Naive thymus-derived CD4-positive, alpha-beta T cell (primary cell): ENCODE measurements at regions of chr17 and their contacts with region 1.

Region 1: GRCh38 chr17:28717578-28718333 is at the start of gene RAB34:
- DNase-seq: peak in 2 of 9 donors; percentile 18 to 21
- ATAC-seq: no peak
- H3K4me3 ChIP-seq: no peak within 1 kb of the TSS
- H3K4me3 Mint-ChIP-seq: peak within 1 kb of the TSS; percentile 58 to 99 (median 76)
- H3K27ac ChIP-seq: peak within 1 kb of the TSS; percentile 52
- H3K27ac Mint-ChIP-seq: peak within 1 kb of the TSS; percentile 59 to 97 (median 85)
- H3K4me1 ChIP-seq: peaks cover 26 to 30% of the 10 kb centered on the region in 2 donors
- H3K4me1 Mint-ChIP-seq: peaks cover 17 to 57% (median 35%) of the 10 kb centered on the region in 7 donors
- H3K27me3 ChIP-seq: no peaks in the 10 kb centered on the region
- H3K27me3 Mint-ChIP-seq: peaks cover 0 to 24% (median 6%) of the 10 kb centered on the region in 5 donors
- total RNA-seq, gene RAB34: 11.0 to 50.2 (median 16.4) TPM

Region 2: GRCh38 chr17:28571255-28572122 is 146.3 kb before region 1 on chr17 and contains the start of gene PIGS:
- CTCF ChIA-PET with region 1: interaction called, 3 read pairs
- POLR2A ChIA-PET with region 1: no interaction called
- intact Hi-C with region 1: loop called in 1 of 2 experiments (anchors 2 kb)
- DNase-seq: peak; percentile 72 to 93 (median 84)
- ATAC-seq: peak; percentile 99
- H3K4me3 ChIP-seq: peak within 1 kb of the TSS; percentile 78
- H3K4me3 Mint-ChIP-seq: peak within 1 kb of the TSS; percentile 93 to 99 (median 96)
- H3K27ac ChIP-seq: peak within 1 kb of the TSS; percentile 90
- H3K27ac Mint-ChIP-seq: peak within 1 kb of the TSS; percentile 84 to 97 (median 93)
- H3K4me1 ChIP-seq: peaks cover 28 to 31% of the 10 kb centered on the region in 2 donors
- H3K4me1 Mint-ChIP-seq: peaks cover 49 to 76% (median 68%) of the 10 kb centered on the region in 7 donors
- H3K27me3 ChIP-seq: no peaks in the 10 kb centered on the region
- H3K27me3 Mint-ChIP-seq: no peaks in the 10 kb centered on the region
- total RNA-seq, gene PIGS: 58.5 to 71.2 (median 62.4) TPM

Region 3: DNA sequence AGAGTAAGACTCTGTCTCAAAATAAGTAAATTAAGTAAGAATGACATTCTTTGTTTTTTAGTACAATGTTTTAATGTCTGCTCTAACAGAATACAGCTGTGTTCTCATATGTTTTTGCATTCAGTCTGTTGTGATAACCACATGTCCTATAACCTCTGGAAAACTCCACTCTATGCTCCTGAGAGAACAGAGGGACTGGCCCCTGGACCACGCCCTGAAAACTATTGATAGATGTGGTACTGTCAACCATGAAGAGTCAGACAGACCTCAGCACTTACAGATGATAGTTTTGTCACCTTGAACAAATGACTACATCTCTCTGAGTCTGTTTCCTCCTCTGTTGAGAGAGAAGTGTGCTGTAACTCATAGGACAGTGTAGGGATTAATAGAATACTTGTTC is 47.8 kb before region 1 on chr17:
- CTCF ChIA-PET with region 1: no interaction called
- POLR2A ChIA-PET with region 1: no interaction called
- intact Hi-C with region 1: no loop called
- DNase-seq: no peak
- ATAC-seq: no peak
- H3K4me3 ChIP-seq: no peak overlapping the region
- H3K4me3 Mint-ChIP-seq: no peak overlapping the region
- H3K27ac ChIP-seq: no peak overlapping the region
- H3K27ac Mint-ChIP-seq: no peak overlapping the region
- H3K4me1 ChIP-seq: peaks cover 0 to 8% of the 10 kb centered on the region in 2 donors
- H3K4me1 Mint-ChIP-seq: peaks cover 18 to 37% (median 32%) of the 10 kb centered on the region in 7 donors
- H3K27me3 ChIP-seq: no peaks in the 10 kb centered on the region
- H3K27me3 Mint-ChIP-seq: no peaks in the 10 kb centered on the region

Region 4: DNA sequence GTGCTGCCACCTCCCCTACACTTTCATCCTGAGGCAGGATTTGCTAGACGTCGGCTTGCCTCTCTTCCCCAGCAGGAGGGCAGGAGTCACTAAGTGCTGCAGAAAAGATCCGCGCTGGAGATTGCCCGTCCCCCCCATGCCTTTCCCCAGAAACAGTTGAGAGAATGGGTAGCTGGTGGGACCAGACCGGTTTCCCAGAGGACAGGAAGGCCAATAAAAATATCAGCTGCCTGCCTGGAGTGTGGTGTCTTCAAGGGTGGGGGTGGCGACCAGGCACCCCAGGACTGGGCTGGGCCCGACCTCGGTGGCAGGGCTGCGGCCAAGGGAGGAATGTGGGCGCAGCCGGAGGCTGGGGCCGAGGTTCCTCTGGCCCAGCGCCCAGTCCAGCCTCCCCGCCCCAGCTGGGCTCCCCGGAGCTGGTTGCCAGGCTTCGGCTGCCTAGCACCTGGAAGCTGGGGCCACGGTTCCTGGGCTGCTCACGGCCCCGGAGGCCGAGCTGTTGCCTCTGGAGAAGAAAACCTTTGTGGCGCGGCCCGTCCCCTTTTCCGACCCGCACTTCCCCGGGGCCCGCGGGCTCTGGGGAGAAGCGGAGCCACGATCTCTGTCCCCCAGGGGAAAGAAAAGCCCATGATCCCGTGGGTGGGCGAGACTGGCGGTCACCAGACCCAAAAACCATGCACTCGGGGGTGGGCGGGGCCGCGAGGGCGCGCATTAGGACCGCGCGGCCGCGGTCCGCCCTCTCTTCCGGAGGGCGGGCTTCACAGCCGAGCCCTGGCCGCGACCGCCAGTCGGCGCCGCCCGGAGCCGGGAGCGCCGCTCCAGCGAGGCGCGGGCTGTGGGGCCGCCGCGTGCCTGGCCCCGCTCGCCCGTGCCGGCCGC is 25.7 kb after region 1 on chr17 and contains the start of gene TRAF4:
- CTCF ChIA-PET with region 1: interaction called, 331 read pairs
- POLR2A ChIA-PET with region 1: interaction called, 23 read pairs
- intact Hi-C with region 1: no loop called
- DNase-seq: peak; percentile 60 to 86 (median 73)
- ATAC-seq: peak; percentile 93
- H3K4me3 ChIP-seq: peak within 1 kb of the TSS; percentile 82
- H3K4me3 Mint-ChIP-seq: peak within 1 kb of the TSS; percentile 87 to 94 (median 91)
- H3K27ac ChIP-seq: peak within 1 kb of the TSS; percentile 83
- H3K27ac Mint-ChIP-seq: peak within 1 kb of the TSS; percentile 78 to 95 (median 92)
- H3K4me1 ChIP-seq: peaks cover 11 to 28% of the 10 kb centered on the region in 2 donors
- H3K4me1 Mint-ChIP-seq: peaks cover 2 to 42% (median 27%) of the 10 kb centered on the region in 7 donors
- H3K27me3 ChIP-seq: no peaks in the 10 kb centered on the region
- H3K27me3 Mint-ChIP-seq: no peaks in the 10 kb centered on the region
- total RNA-seq, gene TRAF4: 22.3 to 228 (median 81.6) TPM

Region 5: DNA sequence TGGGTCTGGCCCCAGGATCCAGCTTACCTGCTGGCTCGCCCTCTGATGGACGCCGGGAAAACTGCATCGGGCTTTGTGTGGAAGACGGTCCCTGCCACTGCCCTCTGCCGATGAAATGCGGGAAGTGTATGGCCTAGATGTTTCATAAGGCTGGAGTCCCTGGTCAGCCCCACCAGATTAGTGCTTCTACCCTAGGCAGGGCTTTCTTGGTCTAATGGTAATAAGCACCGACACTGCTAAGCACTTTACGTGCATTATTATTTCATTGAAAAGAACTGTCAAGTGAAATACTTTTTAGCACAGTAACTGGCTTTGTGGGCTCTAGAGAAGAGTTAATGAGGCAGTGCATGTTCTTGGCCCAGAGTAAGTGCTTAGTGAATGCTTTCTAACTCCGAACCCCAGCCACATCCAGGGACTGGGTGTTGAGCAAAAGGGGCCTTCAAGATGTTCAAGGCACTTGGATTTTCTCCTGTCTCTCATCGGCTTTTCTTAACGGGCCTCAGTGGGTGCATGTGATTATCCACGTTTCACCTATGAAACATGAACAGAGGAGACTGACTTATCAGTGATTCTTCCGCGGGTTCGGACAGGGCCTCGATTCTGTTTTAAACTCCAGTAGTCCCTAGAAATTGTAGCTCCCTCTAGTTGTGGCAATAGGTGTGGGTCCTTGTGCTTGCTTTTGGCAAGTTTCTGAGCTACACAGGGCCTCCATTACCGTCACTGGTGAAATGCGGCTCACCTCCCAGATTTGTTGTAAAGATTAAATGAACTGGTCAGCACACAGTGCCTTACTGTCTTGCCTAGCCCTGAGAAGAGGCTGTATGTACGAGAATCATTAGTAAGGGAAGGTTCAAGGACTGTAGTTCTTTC is 32.7 kb after region 1 on chr17:
- CTCF ChIA-PET with region 1: interaction called, 331 read pairs
- POLR2A ChIA-PET with region 1: interaction called, 23 read pairs
- intact Hi-C with region 1: loop called in 1 of 2 experiments (anchors 5 kb)
- DNase-seq: peak; percentile 73 to 87 (median 82)
- ATAC-seq: peak; percentile 96
- H3K4me3 ChIP-seq: no peak overlapping the region
- H3K4me3 Mint-ChIP-seq: peak overlapping the region in 1 of 10 donors; percentile 51
- H3K27ac ChIP-seq: peak overlapping the region; percentile 2
- H3K27ac Mint-ChIP-seq: peak overlapping the region in 4 of 9 donors; percentile 11 to 52 (median 38)
- H3K4me1 ChIP-seq: peaks cover 6 to 14% of the 10 kb centered on the region in 2 donors
- H3K4me1 Mint-ChIP-seq: peaks cover 0 to 29% (median 15%) of the 10 kb centered on the region in 7 donors
- H3K27me3 ChIP-seq: no peaks in the 10 kb centered on the region
- H3K27me3 Mint-ChIP-seq: no peaks in the 10 kb centered on the region

Region 6: GRCh38 chr17:29078183-29079045 is 360.7 kb after region 1 on chr17:
- CTCF ChIA-PET with region 1: no interaction called
- POLR2A ChIA-PET with region 1: no interaction called
- intact Hi-C with region 1: no loop called
- DNase-seq: no peak
- ATAC-seq: no peak
- H3K4me3 ChIP-seq: no peak overlapping the region
- H3K4me3 Mint-ChIP-seq: no peak overlapping the region
- H3K27ac ChIP-seq: no peak overlapping the region
- H3K27ac Mint-ChIP-seq: no peak overlapping the region
- H3K4me1 ChIP-seq: no peaks in the 10 kb centered on the region
- H3K4me1 Mint-ChIP-seq: peaks cover 0 to 5% (median 0%) of the 10 kb centered on the region in 7 donors
- H3K27me3 ChIP-seq: no peaks in the 10 kb centered on the region
- H3K27me3 Mint-ChIP-seq: no peaks in the 10 kb centered on the region